Ascending aorta (tissue), 2 donors: ENCODE measurements at regions of chr7 and their contacts with region 1.

Region 1: DNA sequence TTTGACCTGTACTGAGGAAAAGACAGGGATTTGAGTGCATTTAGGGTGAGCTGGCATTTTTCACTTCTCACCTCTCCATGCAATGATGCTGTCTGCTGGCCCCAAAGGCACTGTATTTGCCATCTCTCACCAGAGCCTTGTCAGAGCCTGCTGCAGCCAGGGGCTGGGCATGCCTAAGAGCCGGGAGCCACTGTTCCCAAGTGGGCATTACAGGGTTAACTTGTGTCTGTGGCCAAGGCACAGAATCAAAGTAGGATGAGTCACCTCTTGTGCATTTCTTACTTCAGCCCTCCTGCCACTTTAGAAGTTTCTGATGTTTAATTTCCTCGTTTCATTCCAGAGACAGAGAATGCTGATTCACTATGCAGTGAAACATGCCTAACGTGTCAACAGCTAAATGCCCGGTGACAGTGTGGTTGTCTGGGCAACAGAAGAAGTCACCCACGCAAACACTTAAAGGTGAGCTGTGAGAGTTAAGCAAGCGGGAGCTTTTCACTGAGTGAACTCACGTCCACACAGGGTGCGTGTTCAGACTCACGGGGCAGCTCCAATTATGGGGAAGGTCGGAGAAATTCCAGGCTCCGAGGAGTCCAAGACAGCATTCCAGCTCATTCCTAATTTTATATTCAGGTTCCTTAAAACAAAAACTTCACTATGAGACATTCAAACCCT is 57.1 kb upstream of the IGFBP3 start:
- DNase-seq: peak in 1 of 2 donors; percentile 88
- H3K4me3 ChIP-seq: peak overlapping the region in 1 of 2 donors; percentile 13
- H3K27ac ChIP-seq: peak overlapping the region; percentile 78 to 87
- H3K4me1 ChIP-seq: peaks cover 13 to 31% of the 10 kb centered on the region in 2 donors
- H3K27me3 ChIP-seq: no peaks in the 10 kb centered on the region
- CTCF ChIP-seq: no peak

Region 2: GRCh38 chr7:45347804-45348412 is 630.2 kb before region 1 on chr7:
- intact Hi-C with region 1: no loop called
- DNase-seq: no peak
- H3K4me3 ChIP-seq: no peak overlapping the region
- H3K27ac ChIP-seq: no peak overlapping the region
- H3K4me1 ChIP-seq: no peaks in the 10 kb centered on the region
- H3K27me3 ChIP-seq: no peaks in the 10 kb centered on the region
- CTCF ChIP-seq: no peak

Region 3: GRCh38 chr7:46003896-46004875 is 26.0 kb after region 1 on chr7:
- intact Hi-C with region 1: no loop called
- DNase-seq: no peak
- H3K4me3 ChIP-seq: no peak overlapping the region
- H3K27ac ChIP-seq: no peak overlapping the region
- H3K4me1 ChIP-seq: no peaks in the 10 kb centered on the region
- H3K27me3 ChIP-seq: no peaks in the 10 kb centered on the region
- CTCF ChIP-seq: no peak

Region 4: DNA sequence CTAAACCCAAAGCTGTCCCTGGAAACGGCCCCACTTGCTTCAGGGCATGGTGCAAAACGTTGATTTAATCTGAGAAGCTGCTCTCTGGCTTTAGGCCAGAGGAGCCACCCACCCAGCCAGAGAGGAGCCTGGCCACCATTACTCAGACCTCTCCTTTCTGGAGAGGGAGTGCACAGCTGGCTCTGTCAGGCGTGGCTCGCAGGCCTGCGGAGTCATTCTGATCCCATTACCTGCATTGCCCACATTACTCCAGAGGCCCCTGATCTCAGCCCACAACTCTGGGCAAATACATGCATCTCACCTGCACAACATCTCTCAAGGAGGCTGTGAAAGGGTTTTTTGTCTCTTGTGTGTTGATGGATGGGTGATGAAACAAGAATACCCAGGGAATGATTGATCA is 312.9 kb after region 1 on chr7:
- intact Hi-C with region 1: loop called (anchors 5 kb)
- DNase-seq: no peak
- H3K4me3 ChIP-seq: no peak overlapping the region
- H3K27ac ChIP-seq: peak overlapping the region; percentile 74 to 83
- H3K4me1 ChIP-seq: peaks cover 6 to 11% of the 10 kb centered on the region in 2 donors
- H3K27me3 ChIP-seq: no peaks in the 10 kb centered on the region
- CTCF ChIP-seq: no peak